Posterior cingulate gyrus (tissue), 11 donors: ENCODE measurements at regions of chr15 and their contacts with region 1.

Region 1: DNA sequence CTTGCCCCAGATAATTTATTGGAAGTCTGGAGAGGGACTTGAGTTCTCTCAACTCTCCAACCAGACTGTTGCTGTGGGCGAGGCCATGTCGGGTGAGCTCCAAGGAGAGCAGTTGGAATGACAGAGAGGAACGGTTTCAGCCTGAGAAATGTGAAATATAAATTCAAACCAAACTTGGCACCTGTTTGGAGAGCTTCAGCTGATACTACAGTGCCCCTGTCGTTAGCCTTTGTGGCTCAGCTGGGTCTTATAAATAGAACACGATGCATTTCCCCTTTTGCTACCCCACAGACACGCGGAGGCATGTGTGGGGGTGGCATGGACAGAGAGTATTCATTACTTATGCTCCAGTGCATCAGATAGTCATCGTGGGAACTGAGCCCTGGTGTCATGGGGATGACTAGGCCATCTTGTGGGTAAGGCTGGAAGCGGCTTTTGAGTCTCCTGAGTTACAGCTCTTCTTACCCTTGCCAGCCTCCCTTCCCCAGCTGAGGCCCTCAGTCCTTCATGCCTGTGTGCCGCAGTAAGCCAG is 15.6 kb downstream of the SMAD3 start:
- DNase-seq: peak in 4 of 10 donors; percentile 31 to 86 (median 44)

Region 2: GRCh38 chr15:67024314-67024997 is 56.5 kb before region 1 on chr15:
- intact Hi-C with region 1: loop called (anchors 10 kb)
- DNase-seq: peak in 7 of 10 donors; percentile 49 to 92 (median 70)